ENCODE measurements at regions of chr3 and their contacts with region 1.

Region 1: GRCh38 chr3:107978131-107979055 is 112.4 kb downstream of the CD47 start:
- DNase-seq: no peak
- ATAC-seq: peak; percentile 37 to 39
- H3K4me3 ChIP-seq: no peak overlapping the region
- H3K27ac ChIP-seq: peak overlapping the region in 2 of 4 donors; percentile 14 to 74
- H3K4me1 ChIP-seq: peaks cover 9 to 30% of the 10 kb centered on the region in 2 donors
- H3K27me3 ChIP-seq: no peaks in the 10 kb centered on the region
- CTCF ChIP-seq: no peak
- POLR2A ChIP-seq: no peak

Region 2: DNA sequence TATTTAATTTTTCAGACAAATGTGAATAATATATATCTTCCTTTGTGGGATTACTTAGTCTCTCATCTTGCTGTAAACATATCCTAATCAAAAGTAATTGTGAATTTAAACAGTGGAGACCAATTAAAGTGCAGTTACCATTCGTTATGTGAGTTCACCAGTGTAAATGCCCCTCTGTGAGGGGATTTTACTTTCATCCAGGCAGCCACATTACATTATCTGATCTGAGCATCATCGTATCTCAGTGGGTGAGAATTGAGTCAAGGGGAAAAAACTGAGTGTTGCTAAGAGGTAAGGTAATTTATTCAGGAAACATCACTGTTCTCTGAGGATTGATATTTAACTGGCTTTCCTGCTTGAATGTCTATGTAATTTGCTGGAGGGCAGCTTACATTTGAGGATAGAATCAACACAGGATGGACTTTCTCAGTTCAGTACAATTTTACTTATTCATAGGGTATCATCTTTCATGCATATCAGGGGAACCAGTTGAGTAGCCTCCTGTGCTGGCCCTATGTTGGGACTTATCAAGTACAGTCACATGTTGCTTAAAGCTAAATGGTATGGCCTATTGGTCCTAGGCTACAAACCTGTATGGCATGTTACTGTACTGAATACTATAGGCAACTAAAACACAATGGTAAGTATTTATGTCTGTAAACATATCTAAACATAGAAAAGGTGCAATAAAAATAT is 107.3 kb before region 1 on chr3:
- in situ Hi-C with region 1: no loop called
- intact Hi-C with region 1: no loop called
- DNase-seq: no peak
- ATAC-seq: no peak
- H3K4me3 ChIP-seq: no peak overlapping the region
- H3K27ac ChIP-seq: no peak overlapping the region
- H3K4me1 ChIP-seq: no peaks in the 10 kb centered on the region
- H3K27me3 ChIP-seq: no peaks in the 10 kb centered on the region
- CTCF ChIP-seq: no peak
- POLR2A ChIP-seq: no peak

Region 3: DNA sequence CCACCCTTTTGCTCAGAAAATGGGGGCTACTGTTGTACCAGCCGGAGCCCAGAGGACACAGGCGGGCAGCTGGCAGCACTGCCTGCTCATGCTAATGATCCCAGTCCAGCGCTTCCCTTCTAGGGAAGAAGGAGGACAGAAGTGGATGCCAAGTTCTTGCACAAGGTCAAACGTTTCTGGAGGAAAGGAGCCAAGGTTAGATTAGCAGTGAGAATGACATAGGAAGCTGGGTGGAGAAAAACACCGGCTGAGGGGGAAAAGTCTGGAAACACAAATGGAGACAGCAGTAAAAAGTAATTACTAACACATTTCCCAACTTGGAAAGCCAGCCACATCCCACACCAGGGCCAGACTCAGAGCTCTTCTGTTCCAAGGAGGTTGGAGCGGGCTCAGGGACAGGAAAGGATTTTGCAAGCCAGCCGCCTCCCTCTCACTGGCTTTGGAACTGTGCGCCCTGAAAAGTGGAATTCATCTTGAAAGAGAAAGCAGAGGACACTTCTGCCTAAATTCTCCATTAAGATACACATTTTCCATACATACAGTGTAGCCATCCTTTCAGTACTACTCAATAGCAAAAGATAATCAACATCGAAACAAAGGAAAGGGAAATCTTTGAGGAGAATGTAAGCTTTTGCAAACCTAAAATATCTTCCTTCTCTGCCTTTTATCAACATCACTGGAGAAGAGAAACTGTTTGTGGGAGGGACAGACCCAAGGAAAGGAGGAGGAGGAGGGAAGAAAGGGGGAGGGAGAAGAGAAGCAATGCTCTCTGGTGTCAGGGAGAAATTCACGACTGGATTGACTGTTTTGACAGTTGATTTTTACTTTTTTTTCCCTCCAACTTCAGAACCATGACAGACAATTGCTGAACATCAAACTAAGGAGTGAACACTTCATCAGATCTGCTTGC is 21.1 kb before region 1 on chr3:
- in situ Hi-C with region 1: no loop called
- intact Hi-C with region 1: loop called (anchors 1 kb)
- DNase-seq: peak; percentile 58 to 79
- ATAC-seq: peak; percentile 96 to 97
- H3K4me3 ChIP-seq: peak overlapping the region; percentile 17 to 46 (median 26)
- H3K27ac ChIP-seq: peak overlapping the region; percentile 62 to 75 (median 68)
- H3K4me1 ChIP-seq: peaks cover 10 to 19% of the 10 kb centered on the region in 2 donors
- H3K27me3 ChIP-seq: no peaks in the 10 kb centered on the region
- CTCF ChIP-seq: no peak
- POLR2A ChIP-seq: peak in 1 of 2 donors; percentile 8

Region 4: GRCh38 chr3:108124337-108125152 is 146.2 kb after region 1 on chr3:
- in situ Hi-C with region 1: no loop called
- intact Hi-C with region 1: no loop called
- DNase-seq: no peak
- ATAC-seq: no peak
- H3K4me3 ChIP-seq: no peak overlapping the region
- H3K27ac ChIP-seq: no peak overlapping the region
- H3K4me1 ChIP-seq: no peaks in the 10 kb centered on the region
- H3K27me3 ChIP-seq: no peaks in the 10 kb centered on the region
- CTCF ChIP-seq: no peak
- POLR2A ChIP-seq: no peak

Region 5: GRCh38 chr3:108322352-108322751 is 344.0 kb after region 1 on chr3:
- in situ Hi-C with region 1: no loop called
- intact Hi-C with region 1: no loop called
- DNase-seq: no peak
- ATAC-seq: no peak
- H3K4me3 ChIP-seq: no peak overlapping the region
- H3K27ac ChIP-seq: no peak overlapping the region
- H3K4me1 ChIP-seq: no peaks in the 10 kb centered on the region
- H3K27me3 ChIP-seq: no peaks in the 10 kb centered on the region
- CTCF ChIP-seq: no peak
- POLR2A ChIP-seq: no peak